PC-3 (cell line): ENCODE measurements at regions of chr10 and their contacts with region 1.

Region 1: GRCh38 chr10:78657163-78657861 is 411.5 kb upstream of the ZMIZ1 start:
- DNase-seq: peak; percentile 99
- ATAC-seq: peak; percentile 99
- H3K4me3 ChIP-seq: no peak overlapping the region
- H3K27ac ChIP-seq: no peak overlapping the region
- H3K4me1 ChIP-seq: no peaks in the 10 kb centered on the region
- H3K27me3 ChIP-seq: peaks cover 11% of the 10 kb centered on the region
- CTCF ChIP-seq: peak; percentile 98

Region 2: DNA sequence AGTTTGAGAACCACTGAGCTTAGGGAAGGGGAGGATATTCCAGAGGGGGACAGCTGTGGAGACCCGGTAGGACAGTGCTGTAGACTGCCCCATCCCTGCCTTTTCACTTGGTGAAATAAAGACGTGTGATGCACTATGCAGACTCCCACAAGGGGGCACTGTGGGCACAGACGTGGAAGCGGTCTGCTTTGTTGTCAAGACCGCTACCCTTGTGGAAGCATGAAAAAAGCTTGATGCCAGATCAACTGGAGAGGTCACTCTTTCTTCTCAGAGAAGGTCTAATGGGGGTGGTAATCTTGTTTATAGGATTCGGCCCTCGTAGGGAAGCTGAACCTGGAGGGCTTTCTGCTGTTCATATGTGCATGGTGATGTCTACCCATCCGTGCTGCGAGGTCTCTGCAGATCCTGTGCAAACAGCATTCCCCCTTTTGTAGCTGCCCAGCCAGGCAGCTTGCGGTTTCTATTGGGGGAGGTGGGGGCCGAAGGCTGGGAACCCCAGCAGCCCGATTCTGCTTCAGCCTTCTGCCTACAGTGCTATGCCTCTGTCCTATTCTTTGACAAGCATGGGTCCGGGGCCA is 609.9 kb before region 1 on chr10:
- CTCF ChIA-PET with region 1: interaction called, 4 read pairs
- POLR2A ChIA-PET with region 1: no interaction called
- intact Hi-C with region 1: loop called (anchors 1 kb)
- DNase-seq: peak; percentile 100
- ATAC-seq: peak; percentile 75
- H3K4me3 ChIP-seq: no peak overlapping the region
- H3K27ac ChIP-seq: no peak overlapping the region
- H3K4me1 ChIP-seq: no peaks in the 10 kb centered on the region
- H3K27me3 ChIP-seq: no peaks in the 10 kb centered on the region
- CTCF ChIP-seq: peak; percentile 100

Region 3: GRCh38 chr10:78231939-78232338 is 425.4 kb before region 1 on chr10:
- CTCF ChIA-PET with region 1: interaction called, 6 read pairs
- POLR2A ChIA-PET with region 1: no interaction called
- intact Hi-C with region 1: loop called (anchors 1 kb)
- DNase-seq: peak; percentile 79
- ATAC-seq: peak; percentile 71
- H3K4me3 ChIP-seq: no peak overlapping the region
- H3K27ac ChIP-seq: no peak overlapping the region
- H3K4me1 ChIP-seq: no peaks in the 10 kb centered on the region
- H3K27me3 ChIP-seq: peaks cover 71% of the 10 kb centered on the region
- CTCF ChIP-seq: peak; percentile 96

Region 4: DNA sequence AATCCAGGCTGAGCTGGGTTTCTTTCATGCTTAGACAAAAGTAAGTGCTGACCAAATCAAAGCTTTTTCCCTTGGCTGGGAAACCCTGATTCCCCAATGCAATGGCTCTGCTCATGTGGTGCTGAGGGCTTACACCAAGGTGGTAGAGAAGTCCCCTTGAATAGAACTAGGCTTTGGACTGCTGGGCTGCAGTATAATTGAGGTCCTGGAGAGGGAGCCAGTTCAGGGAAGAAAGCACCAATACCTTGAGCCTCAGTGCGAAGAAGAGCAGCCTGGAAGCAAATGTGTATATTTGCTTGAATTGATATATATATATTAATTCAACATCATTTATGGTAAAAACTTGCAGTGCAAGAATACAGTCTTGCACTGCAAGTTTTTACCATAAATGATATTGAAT is 232.6 kb before region 1 on chr10:
- CTCF ChIA-PET with region 1: no interaction called
- POLR2A ChIA-PET with region 1: no interaction called
- intact Hi-C with region 1: loop called (anchors 1 kb)
- DNase-seq: peak; percentile 92
- ATAC-seq: peak; percentile 98
- H3K4me3 ChIP-seq: no peak overlapping the region
- H3K27ac ChIP-seq: no peak overlapping the region
- H3K4me1 ChIP-seq: no peaks in the 10 kb centered on the region
- H3K27me3 ChIP-seq: peaks cover 35% of the 10 kb centered on the region
- CTCF ChIP-seq: peak; percentile 99

Region 5: DNA sequence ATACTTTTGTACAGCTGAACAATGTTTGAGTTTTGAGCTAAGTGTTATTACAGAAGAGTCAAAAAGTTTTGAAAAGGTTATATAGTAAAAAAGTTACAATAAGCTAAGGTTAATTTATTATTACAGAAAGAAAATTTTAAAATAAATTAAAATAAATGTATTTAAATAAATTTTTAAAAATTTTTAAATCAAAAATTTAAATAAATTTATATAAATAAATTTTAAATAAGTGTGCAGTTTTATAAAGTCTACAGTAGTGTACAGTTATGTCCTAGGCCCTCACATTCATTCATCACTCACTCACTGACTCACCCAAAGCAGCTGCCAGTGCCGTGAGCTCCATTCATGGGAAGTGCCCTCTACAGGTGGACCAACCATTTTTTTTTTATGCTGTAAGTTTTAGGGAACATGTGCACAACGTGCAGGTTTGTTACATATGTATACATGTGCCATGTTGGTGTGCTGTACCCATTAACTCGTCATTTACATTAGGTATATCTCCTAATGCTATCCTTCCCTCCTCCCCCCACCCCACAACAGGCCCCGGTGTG is 51.4 kb before region 1 on chr10:
- CTCF ChIA-PET with region 1: interaction called, 10 read pairs
- POLR2A ChIA-PET with region 1: no interaction called
- intact Hi-C with region 1: no loop called
- DNase-seq: peak; percentile 99
- ATAC-seq: peak; percentile 100
- H3K4me3 ChIP-seq: no peak overlapping the region
- H3K27ac ChIP-seq: no peak overlapping the region
- H3K4me1 ChIP-seq: no peaks in the 10 kb centered on the region
- H3K27me3 ChIP-seq: 0 out of 2 replicates have a peak, but pooled peaks cover 5% of the 10 kb centered on the region
- CTCF ChIP-seq: peak; percentile 70

Region 6: DNA sequence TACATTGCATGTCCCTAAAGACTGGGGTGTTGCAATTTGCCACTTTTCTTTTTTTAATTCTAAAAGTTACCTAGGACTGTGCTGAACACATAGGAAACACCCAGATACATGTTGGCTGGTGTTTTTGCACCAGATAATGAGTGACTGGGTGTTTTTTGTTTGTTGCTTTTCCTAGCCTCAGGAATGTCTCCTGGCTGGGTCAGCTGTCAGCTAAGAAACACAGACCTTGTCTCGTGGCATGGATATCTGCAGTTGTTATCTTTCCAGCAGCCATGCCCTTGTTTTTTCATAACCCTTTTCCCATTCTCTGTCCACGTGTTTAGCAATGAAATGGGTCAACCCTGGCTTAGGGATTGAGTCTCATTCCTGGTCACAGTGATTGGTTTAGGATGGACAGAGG is 22.5 kb before region 1 on chr10:
- CTCF ChIA-PET with region 1: no interaction called
- POLR2A ChIA-PET with region 1: no interaction called
- intact Hi-C with region 1: no loop called
- DNase-seq: no peak
- ATAC-seq: no peak
- H3K4me3 ChIP-seq: no peak overlapping the region
- H3K27ac ChIP-seq: no peak overlapping the region
- H3K4me1 ChIP-seq: peaks cover 8% of the 10 kb centered on the region
- H3K27me3 ChIP-seq: no peaks in the 10 kb centered on the region
- CTCF ChIP-seq: no peak

Region 7: DNA sequence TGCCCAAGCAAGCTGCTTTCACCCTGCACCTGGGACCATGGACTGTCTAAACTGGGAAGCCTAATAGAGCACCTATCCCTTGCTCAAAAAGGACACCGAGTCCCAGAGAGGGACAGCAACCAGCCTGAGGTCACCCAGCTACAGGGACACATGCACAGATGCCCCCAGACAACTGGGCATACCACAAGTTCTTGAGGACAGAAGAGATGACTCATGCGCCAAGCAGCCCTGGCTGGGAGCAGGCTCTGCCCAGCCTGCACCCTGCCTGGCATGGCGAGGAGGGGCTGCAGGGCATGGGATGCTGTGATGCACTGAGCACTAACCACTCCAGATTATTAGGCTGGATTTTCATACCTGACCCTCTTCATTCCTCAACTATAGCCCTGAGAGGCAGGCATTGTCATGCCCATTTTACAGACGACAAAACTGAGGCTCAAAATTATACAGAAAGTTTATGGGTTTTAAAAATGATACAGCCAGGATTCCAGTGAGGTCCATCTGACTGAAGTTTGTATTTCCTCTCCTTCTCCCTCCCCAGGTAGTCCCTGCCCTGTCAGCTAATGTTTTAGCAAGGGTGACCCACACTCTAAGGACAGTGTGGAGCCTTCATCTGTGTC is 122.1 kb after region 1 on chr10:
- CTCF ChIA-PET with region 1: no interaction called
- POLR2A ChIA-PET with region 1: no interaction called
- intact Hi-C with region 1: no loop called
- DNase-seq: peak; percentile 96
- ATAC-seq: peak; percentile 69
- H3K4me3 ChIP-seq: no peak overlapping the region
- H3K27ac ChIP-seq: no peak overlapping the region
- H3K4me1 ChIP-seq: peaks cover 20% of the 10 kb centered on the region
- H3K27me3 ChIP-seq: peaks cover 16% of the 10 kb centered on the region; the same call in 1 of the 2 replicates
- CTCF ChIP-seq: no peak

Region 8: DNA sequence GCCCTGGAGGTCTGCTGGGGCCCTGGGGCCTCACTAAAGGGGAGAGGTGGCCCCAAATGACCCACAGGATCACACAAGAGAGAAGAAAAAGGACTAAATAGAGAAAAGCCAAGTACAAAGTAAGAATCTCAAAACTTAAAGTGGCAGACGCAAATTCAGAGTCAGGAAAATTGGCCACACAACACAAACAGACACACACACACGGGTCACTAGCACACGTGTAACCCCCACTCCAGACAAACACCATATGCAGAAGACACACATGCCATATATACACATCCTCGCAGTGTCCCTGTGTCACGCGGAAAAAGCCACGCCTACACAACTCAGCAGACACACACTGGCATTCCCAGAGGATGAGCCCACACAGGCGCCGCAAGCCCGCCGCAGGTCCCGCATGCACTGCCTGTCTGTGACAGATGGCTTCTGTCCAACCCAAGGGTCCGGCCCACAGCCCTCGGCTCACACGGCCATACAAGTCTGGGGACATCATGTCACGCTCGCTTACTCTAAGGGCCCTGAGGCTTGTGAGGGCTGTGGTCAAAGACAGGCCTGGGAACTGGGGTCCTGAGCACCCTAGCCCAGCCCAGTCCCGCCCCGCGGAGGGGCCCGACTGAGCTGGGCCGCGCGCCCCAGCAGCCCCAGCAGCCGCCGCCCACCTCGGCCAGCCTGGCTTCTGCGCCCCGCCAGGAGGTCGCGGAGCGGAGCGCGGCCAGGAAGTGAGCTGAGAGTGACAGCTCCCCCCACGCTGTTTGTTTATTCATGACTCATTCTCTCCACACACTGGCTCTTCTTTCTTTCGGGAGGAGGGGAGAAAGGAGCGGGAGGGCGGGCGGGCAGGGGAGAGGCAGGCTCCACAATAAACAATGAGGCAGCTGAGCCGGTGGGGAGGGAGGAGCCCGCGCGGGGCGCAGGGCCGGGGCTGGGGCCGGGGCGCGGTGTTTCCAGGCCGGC is 315.9 kb after region 1 on chr10:
- CTCF ChIA-PET with region 1: no interaction called
- POLR2A ChIA-PET with region 1: no interaction called
- intact Hi-C with region 1: no loop called
- DNase-seq: peak; percentile 100
- ATAC-seq: peak; percentile 63
- H3K4me3 ChIP-seq: peak overlapping the region; percentile 60
- H3K27ac ChIP-seq: peak overlapping the region; percentile 79
- H3K4me1 ChIP-seq: peaks cover 39% of the 10 kb centered on the region
- H3K27me3 ChIP-seq: no peaks in the 10 kb centered on the region
- CTCF ChIP-seq: peak; percentile 20; the same call in 1 of the 2 replicates